ENCODE measurements at regions of chr5 and their contacts with region 1.

Region 1: GRCh38 chr5:32092938-32093812 is 80.9 kb downstream of the GOLPH3 start:
- DNase-seq: peak; percentile 59 to 74
- H3K4me3 ChIP-seq: no peak overlapping the region
- H3K27ac ChIP-seq: no peak overlapping the region
- H3K4me1 ChIP-seq: no peaks in the 10 kb centered on the region
- H3K27me3 ChIP-seq: no peaks in the 10 kb centered on the region
- CTCF ChIP-seq: peak; percentile 60 to 82 (median 72)
- POLR2A ChIP-seq: no peak

Region 2: GRCh38 chr5:31581498-31582099 is 511.6 kb before region 1 on chr5:
- intact Hi-C with region 1: loop called (anchors 5 kb)
- DNase-seq: no peak
- H3K4me3 ChIP-seq: no peak overlapping the region
- H3K27ac ChIP-seq: no peak overlapping the region
- H3K4me1 ChIP-seq: no peaks in the 10 kb centered on the region
- H3K27me3 ChIP-seq: no peaks in the 10 kb centered on the region
- CTCF ChIP-seq: peak; percentile 40 to 58 (median 42)
- POLR2A ChIP-seq: no peak

Measured in uterus (tissue), 4 donors.